Dendritic cell treated with granulocyte-macrophage colony-stimulating factor and Interleukin-4, amounts not matched to agents 40 ng/mL and 50 ng/mL, for 4 days (primary cell): ENCODE measurements at regions of chr13 and their contacts with region 1.

Region 1: GRCh38 chr13:97448503-97449230 is 14.7 kb downstream of the RAP2A start:
- H3K4me3 Mint-ChIP-seq: no peak overlapping the region
- H3K27ac Mint-ChIP-seq: no peak overlapping the region
- H3K4me1 Mint-ChIP-seq: peaks cover 38% of the 10 kb centered on the region
- H3K27me3 Mint-ChIP-seq: no peaks in the 10 kb centered on the region

Region 2: GRCh38 chr13:96621634-96622183 is 827.0 kb before region 1 on chr13:
- intact Hi-C with region 1: no loop called
- H3K4me3 Mint-ChIP-seq: no peak overlapping the region
- H3K27ac Mint-ChIP-seq: no peak overlapping the region
- H3K4me1 Mint-ChIP-seq: no peaks in the 10 kb centered on the region
- H3K27me3 Mint-ChIP-seq: no peaks in the 10 kb centered on the region

Region 3: DNA sequence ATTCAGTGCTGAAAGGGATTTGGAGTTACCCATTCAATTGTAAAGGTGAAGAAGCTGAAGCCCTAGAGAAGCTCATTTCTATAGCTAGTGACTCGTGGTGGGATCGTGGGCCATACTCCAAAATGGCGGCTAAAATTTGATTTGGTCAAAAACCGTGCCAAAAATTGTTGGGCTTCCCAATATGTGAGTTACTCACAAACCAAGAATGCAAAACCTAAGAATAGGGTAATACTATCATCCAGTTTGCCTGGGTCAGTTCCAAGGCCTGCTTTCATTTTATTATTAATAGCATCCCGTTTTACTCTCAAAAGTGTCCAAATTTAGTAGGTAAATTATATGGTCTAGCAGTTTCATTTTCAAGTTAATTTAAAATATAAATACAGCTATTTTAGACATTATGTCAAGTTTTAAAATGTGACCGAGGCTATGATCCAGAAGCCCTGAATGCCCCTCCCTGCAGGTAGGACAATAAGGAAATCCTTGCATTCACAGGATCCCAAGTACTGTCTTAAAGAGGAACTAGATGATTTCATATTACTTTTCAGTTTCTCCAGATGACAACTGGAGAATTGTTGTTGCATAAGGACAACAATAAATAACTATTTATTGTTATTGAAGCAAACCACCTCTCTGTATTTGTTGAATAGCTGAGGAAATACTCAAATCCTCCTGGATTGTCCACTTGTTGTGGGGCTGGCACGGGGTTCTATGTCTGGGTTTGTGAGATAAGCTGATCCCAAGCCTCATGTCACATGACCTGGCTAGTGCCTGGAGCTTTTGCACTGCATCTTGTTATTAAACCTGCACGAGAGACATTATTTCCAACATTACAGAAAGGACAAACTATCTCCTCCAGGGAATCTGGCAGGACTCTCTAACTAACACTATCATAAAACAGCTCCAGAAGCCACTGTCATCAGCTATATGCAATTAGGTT is 26.3 kb before region 1 on chr13:
- intact Hi-C with region 1: no loop called
- H3K4me3 Mint-ChIP-seq: no peak overlapping the region
- H3K27ac Mint-ChIP-seq: no peak overlapping the region
- H3K4me1 Mint-ChIP-seq: no peaks in the 10 kb centered on the region
- H3K27me3 Mint-ChIP-seq: peaks cover 1% of the 10 kb centered on the region

Region 4: GRCh38 chr13:97567510-97568243 is 119.0 kb after region 1 on chr13:
- intact Hi-C with region 1: loop called (anchors 10 kb)
- H3K4me3 Mint-ChIP-seq: no peak overlapping the region
- H3K27ac Mint-ChIP-seq: no peak overlapping the region
- H3K4me1 Mint-ChIP-seq: peaks cover 9% of the 10 kb centered on the region
- H3K27me3 Mint-ChIP-seq: peaks cover 1% of the 10 kb centered on the region